PC-3 (cell line): ENCODE measurements at regions of chr1 and their contacts with region 1.

Region 1: DNA sequence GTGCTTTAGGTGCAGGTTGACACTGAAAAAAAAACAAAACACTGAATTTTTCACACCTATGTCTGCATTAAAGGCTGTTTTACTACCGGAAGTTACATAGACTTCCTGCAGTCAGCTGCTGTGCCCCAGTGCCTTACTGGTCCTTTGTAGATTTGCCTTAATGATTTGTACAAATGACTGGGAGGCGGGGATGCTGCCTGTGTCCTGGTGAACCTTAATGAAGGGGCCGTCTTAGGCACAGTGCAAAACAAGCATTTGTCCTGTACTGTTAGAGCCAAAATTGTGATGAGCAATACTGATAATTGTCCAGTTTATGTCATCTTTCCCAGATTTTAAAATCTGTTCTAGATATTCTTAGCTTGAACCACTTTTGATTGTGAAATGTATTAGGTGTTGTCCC is 90.9 kb upstream of the PGD start:
- DNase-seq: no peak
- ATAC-seq: no peak
- H3K4me3 ChIP-seq: no peak overlapping the region
- H3K27ac ChIP-seq: no peak overlapping the region
- H3K4me1 ChIP-seq: no peaks in the 10 kb centered on the region
- H3K27me3 ChIP-seq: no peaks in the 10 kb centered on the region
- CTCF ChIP-seq: no peak

Region 2: DNA sequence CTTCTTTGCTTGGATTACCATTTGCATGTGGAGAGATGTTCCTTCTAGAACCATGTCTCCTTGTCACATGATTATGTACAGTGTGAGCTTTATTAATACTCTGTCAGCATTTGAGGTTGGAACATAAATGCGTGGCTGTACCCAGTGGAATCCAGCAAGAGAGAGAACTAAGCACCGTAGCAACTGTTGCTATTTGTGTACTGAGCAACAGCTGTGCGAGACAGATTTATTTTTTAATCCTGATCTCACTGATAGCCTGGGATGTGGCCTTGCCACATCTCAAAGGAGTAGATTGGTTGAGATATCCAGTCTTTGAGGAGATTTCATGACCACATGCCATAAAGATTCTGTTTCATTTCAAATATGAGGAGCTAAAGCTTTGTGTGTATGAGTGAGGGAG is 54.2 kb before region 1 on chr1:
- CTCF ChIA-PET with region 1: no interaction called
- POLR2A ChIA-PET with region 1: interaction called, 14 read pairs
- intact Hi-C with region 1: no loop called
- DNase-seq: peak; percentile 2
- ATAC-seq: peak; percentile 7; the same call in 1 of the 2 replicates
- H3K4me3 ChIP-seq: no peak overlapping the region
- H3K27ac ChIP-seq: no peak overlapping the region
- H3K4me1 ChIP-seq: peaks cover 19% of the 10 kb centered on the region
- H3K27me3 ChIP-seq: no peaks in the 10 kb centered on the region
- CTCF ChIP-seq: no peak

Region 3: GRCh38 chr1:10890491-10891071 is 582.6 kb after region 1 on chr1:
- CTCF ChIA-PET with region 1: no interaction called
- POLR2A ChIA-PET with region 1: no interaction called
- intact Hi-C with region 1: no loop called
- DNase-seq: peak; percentile 78
- ATAC-seq: peak; percentile 73
- H3K4me3 ChIP-seq: no peak overlapping the region
- H3K27ac ChIP-seq: no peak overlapping the region
- H3K4me1 ChIP-seq: peaks cover 15% of the 10 kb centered on the region
- H3K27me3 ChIP-seq: no peaks in the 10 kb centered on the region
- CTCF ChIP-seq: no peak